RWPE1 (cell line): ENCODE measurements at regions of chr10 and their contacts with region 1.

Region 1: GRCh38 chr10:91632671-91633550 is at the start of gene PPP1R3C:
- DNase-seq: peak; percentile 91
- H3K27ac ChIP-seq: peak within 1 kb of the TSS; percentile 86
- CTCF ChIP-seq: peak; percentile 78

Region 2: GRCh38 chr10:91389636-91390512 is 243.0 kb before region 1 on chr10:
- CTCF ChIA-PET with region 1: interaction called, 11 read pairs
- POLR2A ChIA-PET with region 1: no interaction called
- DNase-seq: peak; percentile 54
- H3K27ac ChIP-seq: no peak overlapping the region
- CTCF ChIP-seq: peak; percentile 73

Region 3: DNA sequence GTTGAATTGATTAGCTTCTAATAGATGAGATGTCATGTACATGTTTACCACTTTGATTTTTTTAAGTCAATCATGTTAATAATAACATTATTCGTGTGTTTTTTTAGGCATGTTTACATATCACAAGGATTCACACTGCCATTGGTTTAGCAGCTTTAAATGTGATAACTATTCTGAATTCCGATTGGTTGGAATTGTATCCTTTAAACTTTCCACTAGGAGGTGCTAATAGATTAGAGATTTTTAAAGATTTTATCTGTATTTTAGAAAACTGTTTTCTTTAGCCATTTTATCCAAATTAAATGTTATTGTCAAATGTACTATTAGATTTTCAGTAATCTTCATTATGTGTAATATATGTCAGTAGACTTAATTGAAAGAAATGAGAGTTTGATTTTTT is 139.6 kb before region 1 on chr10:
- CTCF ChIA-PET with region 1: interaction called, 29 read pairs
- POLR2A ChIA-PET with region 1: interaction called, 3 read pairs
- DNase-seq: peak; percentile 65
- H3K27ac ChIP-seq: no peak overlapping the region
- CTCF ChIP-seq: peak; percentile 61

Region 4: DNA sequence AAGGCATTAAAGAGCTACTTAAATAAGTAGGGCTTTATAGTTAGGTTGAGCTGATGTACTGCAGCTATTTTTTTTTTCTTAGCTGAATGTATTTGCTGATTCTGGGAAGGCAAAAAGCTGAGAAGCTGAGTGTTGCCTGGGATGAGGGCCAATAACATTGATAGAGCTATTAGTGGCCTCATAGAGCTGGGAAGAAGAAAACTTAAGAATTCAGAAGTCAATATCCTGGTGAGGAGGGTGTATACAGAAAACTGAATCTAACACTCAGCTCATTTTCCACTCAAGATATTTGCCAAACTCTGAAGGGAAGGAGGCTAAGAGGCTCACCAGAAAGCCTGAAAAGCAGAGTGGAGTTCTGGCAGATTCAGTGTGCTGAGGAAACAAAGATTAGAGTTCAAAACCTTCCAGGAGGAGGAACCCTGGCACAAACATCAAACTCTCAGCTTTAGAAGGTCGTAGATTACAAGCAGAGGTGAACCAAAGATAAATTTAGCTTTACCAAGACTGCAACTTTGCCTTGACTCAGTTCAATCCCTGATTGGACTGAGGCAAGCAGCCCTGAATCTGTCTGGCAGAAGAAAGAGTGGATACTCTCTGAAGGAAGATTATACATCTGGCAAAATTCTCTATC is 11.3 kb before region 1 on chr10:
- CTCF ChIA-PET with region 1: interaction called, 12 read pairs
- POLR2A ChIA-PET with region 1: no interaction called
- DNase-seq: no peak
- H3K27ac ChIP-seq: no peak overlapping the region
- CTCF ChIP-seq: no peak

Region 5: GRCh38 chr10:91652364-91652763 is 19.5 kb after region 1 on chr10:
- CTCF ChIA-PET with region 1: interaction called, 12 read pairs
- POLR2A ChIA-PET with region 1: no interaction called
- DNase-seq: peak; percentile 94
- H3K27ac ChIP-seq: peak overlapping the region; percentile 64; the same call in 1 of the 2 replicates
- CTCF ChIP-seq: no peak

Region 6: DNA sequence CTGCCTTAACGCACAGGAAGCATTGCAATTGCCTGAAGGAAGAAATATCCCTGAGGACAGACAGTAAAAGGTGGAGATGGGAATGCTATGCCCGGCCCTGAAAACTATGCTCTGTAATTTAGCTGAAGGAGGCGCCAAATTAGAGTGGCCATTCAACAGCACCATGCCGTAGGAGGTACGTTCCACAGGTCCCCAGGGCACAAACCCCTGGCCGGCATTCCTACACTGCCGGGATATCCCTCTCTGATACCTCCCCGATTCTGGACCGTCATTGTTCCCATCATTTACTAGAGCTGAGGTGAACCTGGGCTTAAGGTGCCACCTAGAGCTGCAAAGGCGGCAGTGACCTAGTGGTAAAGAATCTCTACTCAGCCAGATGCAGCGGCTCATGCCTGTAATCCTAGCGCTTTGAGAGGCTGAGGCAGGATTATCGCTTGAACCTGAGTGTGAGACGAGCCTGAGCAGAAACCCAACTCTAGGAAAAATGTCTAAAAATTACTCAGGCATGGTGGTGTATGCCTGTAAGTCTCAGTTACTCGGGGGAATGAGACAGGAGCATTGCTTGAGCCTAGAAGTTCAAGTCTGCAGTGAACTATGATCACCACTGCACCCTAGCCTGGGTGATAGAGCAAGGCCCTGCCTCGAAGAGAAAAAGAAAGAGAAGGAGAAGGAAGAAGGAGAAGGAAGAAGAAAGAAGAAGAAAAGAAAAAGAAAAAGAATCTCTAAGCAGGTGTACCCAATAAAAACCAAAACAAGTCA is 112.3 kb after region 1 on chr10:
- CTCF ChIA-PET with region 1: interaction called, 19 read pairs
- POLR2A ChIA-PET with region 1: interaction called, 11 read pairs
- DNase-seq: peak; percentile 33
- H3K27ac ChIP-seq: no peak overlapping the region
- CTCF ChIP-seq: peak; percentile 29; the same call in 1 of the 2 replicates

Region 7: GRCh38 chr10:91865562-91866081 is 232.7 kb after region 1 on chr10:
- CTCF ChIA-PET with region 1: no interaction called
- POLR2A ChIA-PET with region 1: no interaction called
- DNase-seq: no peak
- H3K27ac ChIP-seq: no peak overlapping the region
- CTCF ChIP-seq: no peak